Caco-2 (cell line): ENCODE measurements at regions of chrX and their contacts with region 1.

Region 1: GRCh38 chrX:109536439-109537336 is at the start of gene NXT2:
- DNase-seq: peak; percentile 91 to 92
- H3K4me3 ChIP-seq: peak within 1 kb of the TSS; percentile 79
- H3K4me3 Mint-ChIP-seq: peak within 1 kb of the TSS; percentile 96
- H3K27ac Mint-ChIP-seq: peak within 1 kb of the TSS; percentile 99
- H3K4me1 ChIP-seq: 0 out of 2 replicates have a peak, but pooled peaks cover 3% of the 10 kb centered on the region
- H3K4me1 Mint-ChIP-seq: no peaks in the 10 kb centered on the region
- H3K27me3 ChIP-seq: no peaks in the 10 kb centered on the region
- H3K27me3 Mint-ChIP-seq: peaks cover 7% of the 10 kb centered on the region
- CTCF ChIP-seq: no peak
- total RNA-seq, gene NXT2: 9.7 and 9.8 TPM in 2 replicates

Region 2: DNA sequence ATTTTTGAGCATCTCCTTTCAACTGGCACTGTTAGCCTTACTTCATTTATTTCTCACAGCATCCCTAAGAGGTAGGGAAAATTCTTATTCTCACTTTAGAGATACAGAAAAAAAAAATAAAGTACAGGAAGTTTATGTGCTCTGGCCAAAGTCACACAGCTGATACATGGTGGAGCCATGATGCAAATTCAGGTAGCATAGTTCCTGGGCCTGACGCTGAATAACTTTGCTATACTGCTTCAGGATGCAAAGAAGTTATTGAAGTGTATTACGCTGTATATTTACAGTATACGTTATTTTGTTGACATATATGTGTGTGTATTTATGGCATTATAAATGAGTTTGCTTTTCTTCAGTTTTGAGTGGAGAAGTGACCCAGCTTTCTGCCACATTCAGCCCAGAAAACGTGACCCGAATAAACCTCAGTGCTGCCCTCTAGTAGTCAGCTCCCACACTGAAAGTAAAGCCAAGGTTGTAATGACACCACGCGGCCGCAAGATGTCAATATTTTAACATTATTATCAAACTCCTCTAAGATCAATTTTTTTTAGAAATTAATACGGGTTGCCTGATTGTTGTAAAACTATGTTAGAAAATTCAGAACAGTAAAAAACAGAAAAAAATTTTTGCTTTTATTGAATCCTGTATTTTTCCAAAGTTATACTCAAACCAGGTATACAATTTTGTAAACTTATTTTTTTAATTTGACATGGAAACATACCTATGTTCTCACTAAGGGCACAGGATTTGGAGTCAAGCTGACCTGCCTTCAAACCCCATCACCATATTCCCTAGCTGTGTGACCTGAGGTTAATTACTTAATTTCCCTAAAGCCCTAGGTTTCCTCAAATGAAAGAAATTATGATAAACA is 51.0 kb before region 1 on chrX:
- CTCF ChIA-PET with region 1: interaction called, 18 read pairs
- POLR2A ChIA-PET with region 1: interaction called, 4 read pairs
- intact Hi-C with region 1: loop called (anchors 2 kb)
- DNase-seq: peak; percentile 46 to 52
- H3K4me3 ChIP-seq: no peak overlapping the region
- H3K4me3 Mint-ChIP-seq: no peak overlapping the region
- H3K27ac Mint-ChIP-seq: no peak overlapping the region
- H3K4me1 ChIP-seq: no peaks in the 10 kb centered on the region
- H3K4me1 Mint-ChIP-seq: no peaks in the 10 kb centered on the region
- H3K27me3 ChIP-seq: no peaks in the 10 kb centered on the region
- H3K27me3 Mint-ChIP-seq: peaks cover 8% of the 10 kb centered on the region
- CTCF ChIP-seq: peak; percentile 90 to 91

Region 3: DNA sequence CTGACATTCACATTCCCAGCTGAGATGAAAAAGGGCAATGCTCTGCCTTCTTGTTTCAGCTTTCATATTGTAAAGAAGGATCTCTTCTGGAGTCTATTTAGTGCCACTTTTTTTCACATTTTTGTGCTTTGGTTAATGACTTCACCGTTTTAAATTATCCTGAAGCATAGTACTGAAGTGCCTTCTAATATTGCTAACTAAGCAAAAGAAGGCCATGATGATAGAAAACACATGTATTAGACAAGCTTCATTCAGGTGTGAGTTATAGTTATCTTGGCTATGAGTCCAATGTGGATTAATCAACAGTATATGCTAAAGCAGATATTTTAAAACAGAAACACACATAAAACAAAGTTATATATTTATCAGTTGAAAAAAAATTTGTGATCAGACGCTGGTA is 40.4 kb after region 1 on chrX:
- CTCF ChIA-PET with region 1: no interaction called
- POLR2A ChIA-PET with region 1: interaction called, 7 read pairs
- intact Hi-C with region 1: loop called (anchors 2 kb)
- DNase-seq: no peak
- H3K4me3 ChIP-seq: no peak overlapping the region
- H3K4me3 Mint-ChIP-seq: no peak overlapping the region
- H3K27ac Mint-ChIP-seq: no peak overlapping the region
- H3K4me1 ChIP-seq: no peaks in the 10 kb centered on the region
- H3K4me1 Mint-ChIP-seq: peaks cover 13% of the 10 kb centered on the region
- H3K27me3 ChIP-seq: no peaks in the 10 kb centered on the region
- H3K27me3 Mint-ChIP-seq: no peaks in the 10 kb centered on the region
- CTCF ChIP-seq: no peak

Region 4: DNA sequence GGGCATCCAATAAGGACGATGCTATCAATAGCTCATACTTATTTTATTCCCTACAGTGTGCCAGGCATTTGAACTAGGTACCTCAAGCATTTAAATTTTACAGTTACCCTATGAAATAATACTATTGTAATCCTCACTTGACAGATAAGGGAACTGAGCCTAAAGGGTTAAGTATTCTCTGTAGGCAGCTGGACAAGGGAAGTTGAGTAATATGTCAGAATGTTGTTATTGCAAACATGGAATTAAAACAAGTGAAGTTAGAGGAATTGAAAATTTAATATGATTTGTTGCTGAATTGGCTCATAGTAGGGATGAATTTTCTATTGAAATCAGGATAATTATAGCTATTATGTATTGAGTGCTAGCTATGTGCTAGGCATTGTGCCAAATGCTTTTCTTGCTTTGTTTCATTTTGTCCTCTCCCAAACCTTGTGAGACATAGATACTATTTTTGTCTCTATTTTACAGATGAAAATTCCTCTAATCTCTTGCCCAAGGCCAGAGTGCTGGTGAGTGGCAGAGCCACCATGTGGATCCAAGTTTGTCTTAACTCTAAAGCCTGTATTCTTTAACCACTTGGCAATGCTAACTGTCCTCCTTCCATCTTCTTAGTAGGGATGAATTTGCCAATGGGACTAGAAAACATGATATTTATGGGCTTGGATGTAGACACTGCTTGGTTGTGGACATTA is 524.3 kb after region 1 on chrX:
- CTCF ChIA-PET with region 1: no interaction called
- POLR2A ChIA-PET with region 1: no interaction called
- intact Hi-C with region 1: no loop called
- DNase-seq: no peak
- H3K4me3 ChIP-seq: no peak overlapping the region
- H3K4me3 Mint-ChIP-seq: no peak overlapping the region
- H3K27ac Mint-ChIP-seq: no peak overlapping the region
- H3K4me1 ChIP-seq: no peaks in the 10 kb centered on the region
- H3K4me1 Mint-ChIP-seq: no peaks in the 10 kb centered on the region
- H3K27me3 ChIP-seq: no peaks in the 10 kb centered on the region
- H3K27me3 Mint-ChIP-seq: no peaks in the 10 kb centered on the region
- CTCF ChIP-seq: no peak